Ascending aorta (tissue), 2 donors: ENCODE measurements at regions of chr18 and their contacts with region 1.

Region 1: GRCh38 chr18:77132371-77133050 is at the start of gene MBP:
- DNase-seq: peak in 1 of 2 donors; percentile 82
- H3K4me3 ChIP-seq: peak within 1 kb of the TSS; percentile 77 to 90
- H3K27ac ChIP-seq: peak within 1 kb of the TSS; percentile 92 to 96
- H3K4me1 ChIP-seq: peaks cover 5 to 31% of the 10 kb centered on the region in 2 donors
- H3K27me3 ChIP-seq: no peaks in the 10 kb centered on the region
- CTCF ChIP-seq: no peak
- total RNA-seq, gene MBP: 8.1 TPM

Region 2: GRCh38 chr18:76459687-76460350 is 672.7 kb before region 1 on chr18:
- intact Hi-C with region 1: loop called (anchors 5 kb)
- DNase-seq: peak in 1 of 2 donors; percentile 94
- H3K4me3 ChIP-seq: peak overlapping the region; percentile 36 to 51
- H3K27ac ChIP-seq: peak overlapping the region; percentile 78 to 96
- H3K4me1 ChIP-seq: peaks cover 0 to 12% of the 10 kb centered on the region in 2 donors
- H3K27me3 ChIP-seq: no peaks in the 10 kb centered on the region
- CTCF ChIP-seq: no peak

Region 3: GRCh38 chr18:77000527-77000926 is 132.0 kb before region 1 on chr18:
- intact Hi-C with region 1: loop called (anchors 5 kb)
- DNase-seq: no peak
- H3K4me3 ChIP-seq: peak overlapping the region in 1 of 2 donors; percentile 54
- H3K27ac ChIP-seq: no peak overlapping the region
- H3K4me1 ChIP-seq: no peaks in the 10 kb centered on the region
- H3K27me3 ChIP-seq: no peaks in the 10 kb centered on the region
- CTCF ChIP-seq: peak; percentile 83 to 98 (median 97)

Region 4: GRCh38 chr18:77087393-77088141 is 44.9 kb before region 1 on chr18:
- intact Hi-C with region 1: loop called (anchors 1 kb)
- DNase-seq: peak in 1 of 2 donors; percentile 71
- H3K4me3 ChIP-seq: peak overlapping the region; percentile 27 to 58
- H3K27ac ChIP-seq: peak overlapping the region; percentile 68 to 85
- H3K4me1 ChIP-seq: peaks cover 0 to 24% of the 10 kb centered on the region in 2 donors
- H3K27me3 ChIP-seq: no peaks in the 10 kb centered on the region
- CTCF ChIP-seq: no peak

Region 5: DNA sequence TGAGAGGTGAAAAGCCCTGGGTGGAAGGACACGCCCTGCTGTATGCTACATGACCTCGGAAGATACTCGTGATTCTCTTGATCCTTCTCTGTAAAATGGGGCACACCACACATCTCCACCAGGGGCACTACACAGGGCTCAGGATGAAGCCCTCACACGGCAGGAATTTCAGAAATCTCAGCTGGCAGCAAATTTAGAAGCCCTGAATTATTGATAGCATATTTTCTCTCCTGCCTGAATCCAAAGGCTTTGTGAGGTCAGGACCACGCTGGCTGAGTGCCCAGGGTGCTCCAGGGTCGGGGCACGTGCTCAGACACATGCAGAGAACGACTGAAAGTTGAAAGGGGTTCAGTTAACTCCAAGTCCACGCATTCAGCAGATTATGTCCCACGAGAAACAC is 75.0 kb after region 1 on chr18:
- intact Hi-C with region 1: loop called (anchors 2 kb)
- DNase-seq: peak; percentile 35 to 82
- H3K4me3 ChIP-seq: no peak overlapping the region
- H3K27ac ChIP-seq: peak overlapping the region; percentile 70 to 75
- H3K4me1 ChIP-seq: peaks cover 0 to 15% of the 10 kb centered on the region in 2 donors
- H3K27me3 ChIP-seq: no peaks in the 10 kb centered on the region
- CTCF ChIP-seq: peak; percentile 57 to 68 (median 65)